ENCODE measurements at regions of chr15 and their contacts with region 1.

Region 1: GRCh38 chr15:99059010-99059981 is 45.6 kb upstream of the SYNM start:
- DNase-seq: peak; percentile 87
- ATAC-seq: peak; percentile 92

Region 2: DNA sequence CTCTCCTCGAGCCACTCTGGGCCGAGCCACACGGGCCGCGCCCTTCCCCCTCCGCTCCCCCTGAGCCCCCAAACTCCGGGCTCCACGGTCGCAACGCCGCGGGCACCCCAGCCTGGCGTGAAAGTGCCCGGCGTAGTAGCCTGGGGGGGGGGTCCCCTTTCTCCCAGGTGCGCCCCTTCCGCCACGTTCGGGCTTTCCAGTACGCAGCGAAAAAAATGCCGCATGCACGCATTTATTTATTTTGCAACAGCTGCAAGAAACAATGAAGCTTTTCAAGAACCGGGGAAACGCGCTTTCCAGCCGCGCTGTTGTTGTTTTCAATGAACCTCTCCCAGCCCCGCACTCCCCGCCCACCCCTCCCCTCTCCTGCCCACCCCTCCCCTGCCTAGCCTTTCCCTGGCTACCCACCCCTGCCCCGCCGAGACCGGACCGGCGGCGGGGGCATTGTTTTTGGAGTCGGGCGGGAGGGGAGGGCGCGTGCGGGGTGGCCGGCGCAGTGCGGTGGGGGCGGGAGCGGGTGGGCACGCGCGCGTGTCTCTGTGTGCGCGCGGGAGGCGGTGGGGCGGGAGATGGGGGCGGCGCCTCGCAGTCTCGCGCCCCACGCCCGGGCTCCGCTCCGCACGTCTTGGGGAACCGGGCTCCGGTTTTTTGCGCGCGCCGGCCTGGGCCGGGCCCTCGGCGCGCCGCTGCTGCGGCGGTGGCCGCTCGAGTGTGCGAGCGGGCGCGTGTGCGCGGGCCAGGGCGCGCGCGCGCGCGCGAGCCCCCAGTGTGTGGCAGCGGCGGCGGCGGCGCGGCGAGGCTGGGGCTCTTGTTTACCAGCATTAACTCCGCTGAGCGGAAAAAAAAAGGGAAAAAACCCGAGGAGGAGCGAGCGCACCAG is 411.3 kb before region 1 on chr15 and contains the start of gene IGF1R:
- intact Hi-C with region 1: loop called (anchors 5 kb)
- DNase-seq: peak; percentile 94
- ATAC-seq: peak; percentile 90
- total RNA-seq, gene IGF1R: 26.3 TPM

Region 3: DNA sequence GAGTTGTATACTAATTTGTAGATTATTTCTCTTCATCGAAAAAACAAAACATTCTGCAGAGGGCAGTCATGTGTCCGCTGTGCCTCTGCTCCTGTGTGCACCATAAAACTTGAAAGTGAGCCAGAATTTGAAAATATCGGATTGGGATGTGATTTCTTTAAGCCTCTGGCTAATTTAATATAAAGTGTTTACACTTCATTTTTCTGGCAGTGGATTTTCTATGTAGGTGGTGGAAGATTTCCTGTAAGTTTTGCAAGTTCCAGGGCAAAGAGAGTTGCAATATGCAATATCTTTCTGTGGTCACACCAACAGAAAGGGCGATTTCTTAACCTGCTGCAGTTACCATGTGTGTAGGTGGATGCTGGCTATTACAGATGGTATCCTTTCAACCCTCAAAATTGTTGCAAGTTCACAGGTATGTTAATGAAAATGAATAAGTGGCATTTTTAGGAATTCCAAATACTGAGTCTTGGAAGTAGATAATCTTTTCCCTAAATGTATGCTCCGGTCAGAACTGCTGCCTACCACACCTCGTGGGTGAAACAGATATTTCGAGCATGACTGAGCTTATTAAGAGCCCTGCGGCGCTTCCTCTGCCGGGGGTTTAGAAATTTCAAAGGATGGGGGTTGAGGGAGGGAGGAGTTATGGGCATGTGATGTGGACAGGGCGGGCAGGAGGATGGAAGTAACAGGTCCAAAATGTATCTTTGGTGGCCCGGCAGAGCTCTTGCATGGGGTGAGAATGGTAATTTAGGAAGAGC is 185.7 kb before region 1 on chr15:
- intact Hi-C with region 1: loop called (anchors 5 kb)
- DNase-seq: no peak
- ATAC-seq: no peak

Region 4: GRCh38 chr15:98943601-98944151 is 115.6 kb before region 1 on chr15:
- intact Hi-C with region 1: loop called (anchors 5 kb)
- DNase-seq: peak; percentile 77
- ATAC-seq: peak; percentile 85

Measured in Right ventricle myocardium inferior (tissue), 1 donor.